ENCODE measurements at regions of chr19 and their contacts with region 1.

Region 1: GRCh38 chr19:17932485-17933338 is at the start of gene CCDC124:
- H3K4me3 ChIP-seq: peak within 1 kb of the TSS; percentile 92
- H3K27ac ChIP-seq: peak within 1 kb of the TSS; percentile 75
- H3K4me1 ChIP-seq: no peaks in the 10 kb centered on the region
- CTCF ChIP-seq: peak; percentile 99

Region 2: GRCh38 chr19:17865364-17866311 is 67.1 kb before region 1 on chr19:
- CTCF ChIA-PET with region 1: interaction called, 22 read pairs
- POLR2A ChIA-PET with region 1: interaction called, 86 read pairs
- H3K4me3 ChIP-seq: no peak overlapping the region
- H3K27ac ChIP-seq: no peak overlapping the region
- H3K4me1 ChIP-seq: no peaks in the 10 kb centered on the region
- CTCF ChIP-seq: no peak

Region 3: DNA sequence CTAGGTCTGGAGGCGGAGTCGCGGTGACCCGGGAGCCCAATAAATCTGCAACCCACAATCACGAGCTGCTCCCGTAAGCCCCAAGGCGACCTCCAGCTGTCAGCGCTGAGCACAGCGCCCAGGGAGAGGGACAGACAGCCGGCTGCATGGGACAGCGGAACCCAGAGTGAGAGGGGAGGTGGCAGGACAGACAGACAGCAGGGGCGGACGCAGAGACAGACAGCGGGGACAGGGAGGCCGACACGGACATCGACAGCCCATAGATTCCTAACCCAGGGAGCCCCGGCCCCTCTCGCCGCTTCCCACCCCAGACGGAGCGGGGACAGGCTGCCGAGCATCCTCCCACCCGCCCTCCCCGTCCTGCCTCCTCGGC is 60.8 kb before region 1 on chr19 and contains the start of gene SLC5A5:
- CTCF ChIA-PET with region 1: interaction called, 22 read pairs
- POLR2A ChIA-PET with region 1: interaction called, 17 read pairs
- H3K4me3 ChIP-seq: no peak within 1 kb of the TSS
- H3K27ac ChIP-seq: no peak within 1 kb of the TSS
- H3K4me1 ChIP-seq: peaks cover 3% of the 10 kb centered on the region; the same call in 1 of the 2 replicates
- CTCF ChIP-seq: no peak

Region 4: DNA sequence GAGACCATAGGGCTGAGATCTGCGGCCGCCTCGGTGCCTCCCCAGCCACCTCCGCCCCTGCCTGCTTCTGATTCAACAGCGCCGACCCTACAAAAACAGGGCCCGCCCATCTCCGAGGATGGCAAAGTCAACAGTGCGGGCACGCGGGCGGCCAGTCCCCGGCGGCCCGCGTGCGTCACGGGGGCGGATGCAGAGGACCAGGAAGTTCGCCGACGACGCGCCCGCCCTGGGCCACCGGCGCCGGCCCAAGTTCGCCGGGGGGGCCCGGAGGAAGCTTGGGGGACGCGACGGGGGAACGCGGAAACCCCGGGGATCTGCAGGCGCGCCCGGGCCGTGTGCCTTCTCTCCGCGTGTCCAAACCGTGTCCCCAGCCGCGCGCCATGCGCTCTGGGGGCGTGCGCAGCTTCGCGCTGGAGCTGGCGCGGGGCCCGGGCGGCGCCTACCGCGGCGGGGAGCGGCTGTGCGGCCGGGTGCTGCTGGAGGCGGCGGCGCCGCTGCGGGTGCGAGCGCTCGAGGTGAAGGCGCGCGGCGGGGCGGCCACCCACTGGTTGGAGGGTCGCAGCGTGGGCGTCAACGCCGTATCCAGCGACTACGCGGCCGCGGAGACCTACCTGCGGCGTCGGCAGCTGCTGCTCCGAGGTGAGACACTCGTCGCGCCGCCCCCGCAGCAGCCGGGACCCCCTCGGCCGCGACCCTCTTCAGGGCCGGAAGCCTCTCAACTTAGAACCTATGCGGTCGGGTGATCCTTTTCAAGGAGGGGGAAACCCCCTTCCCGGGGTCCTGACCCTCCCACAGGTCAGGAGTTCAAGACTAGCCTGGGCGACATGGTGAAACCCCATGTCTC is 68.4 kb after region 1 on chr19:
- CTCF ChIA-PET with region 1: interaction called, 233 read pairs
- POLR2A ChIA-PET with region 1: interaction called, 3 read pairs
- H3K4me3 ChIP-seq: peak overlapping the region; percentile 47
- H3K27ac ChIP-seq: no peak overlapping the region; the same call in 1 of the 2 replicates
- H3K4me1 ChIP-seq: no peaks in the 10 kb centered on the region
- CTCF ChIP-seq: no peak